ENCODE measurements at regions of chr15 and their contacts with region 1.

Region 1: DNA sequence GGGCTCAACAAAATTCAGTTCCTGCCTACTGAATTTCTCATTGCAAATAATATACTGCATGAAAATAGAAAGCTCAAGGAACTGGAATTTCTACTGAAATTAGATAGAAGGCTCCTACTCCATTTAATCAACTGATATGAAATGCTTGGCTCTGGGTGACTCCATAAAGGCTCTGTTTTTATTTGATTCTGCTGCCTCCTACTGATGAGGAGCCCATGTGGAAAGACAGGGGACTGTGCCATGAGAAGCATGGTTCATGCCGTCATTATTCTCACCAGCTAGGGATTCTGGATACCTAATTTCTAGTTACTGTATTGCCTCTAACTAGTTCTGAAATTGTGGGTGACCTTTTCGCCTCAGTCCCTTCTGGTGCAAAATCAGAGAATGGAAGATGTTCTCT is 366.2 kb upstream of the DPH6 start:
- DNase-seq: peak; percentile 58
- H3K4me3 ChIP-seq: no peak overlapping the region
- H3K27ac ChIP-seq: no peak overlapping the region
- H3K4me1 ChIP-seq: no peaks in the 10 kb centered on the region
- H3K27me3 ChIP-seq: no peaks in the 10 kb centered on the region
- CTCF ChIP-seq: peak; percentile 60

Region 2: DNA sequence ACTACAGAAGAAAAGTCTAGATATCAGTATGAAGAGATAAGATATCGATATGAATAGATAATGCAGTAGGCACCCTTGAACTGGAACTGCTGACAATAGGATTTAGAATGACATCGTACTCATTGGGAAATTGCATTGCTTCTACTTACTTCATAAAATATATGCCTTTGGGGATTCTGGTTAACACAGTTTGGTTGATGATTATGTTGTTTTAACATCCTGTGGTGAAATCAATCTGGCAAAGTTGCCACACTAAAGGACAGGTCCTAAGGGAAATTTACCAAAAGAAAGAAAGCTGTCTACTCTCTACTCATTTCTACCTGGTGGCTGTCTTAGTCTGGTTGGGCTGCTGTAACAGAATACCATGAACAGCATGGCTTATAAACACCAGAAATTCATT is 51.1 kb after region 1 on chr15:
- CTCF ChIA-PET with region 1: no interaction called
- POLR2A ChIA-PET with region 1: no interaction called
- intact Hi-C with region 1: loop called (anchors 10 kb)
- DNase-seq: no peak
- H3K4me3 ChIP-seq: no peak overlapping the region
- H3K27ac ChIP-seq: no peak overlapping the region
- H3K4me1 ChIP-seq: peaks cover 9% of the 10 kb centered on the region
- H3K27me3 ChIP-seq: no peaks in the 10 kb centered on the region
- CTCF ChIP-seq: no peak

Measured in A673 (cell line).